ENCODE measurements at regions of chr11 and their contacts with region 1.

Region 1: GRCh38 chr11:47176328-47177228 is at the start of gene ARFGAP2:
- DNase-seq: peak; percentile 96 to 97
- ATAC-seq: peak; percentile 87 to 96 (median 92)
- H3K4me3 ChIP-seq: peak within 1 kb of the TSS; percentile 75 to 100 (median 90)
- H3K27ac ChIP-seq: peak within 1 kb of the TSS; percentile 92 to 100 (median 98)
- H3K4me1 ChIP-seq: peaks cover 33 to 89% (median 73%) of the 10 kb centered on the region in 9 donors
- H3K27me3 ChIP-seq: no peaks in the 10 kb centered on the region
- CTCF ChIP-seq: no peak
- total RNA-seq, gene ARFGAP2: 55.7 to 69.7 (median 62.9) TPM

Region 2: DNA sequence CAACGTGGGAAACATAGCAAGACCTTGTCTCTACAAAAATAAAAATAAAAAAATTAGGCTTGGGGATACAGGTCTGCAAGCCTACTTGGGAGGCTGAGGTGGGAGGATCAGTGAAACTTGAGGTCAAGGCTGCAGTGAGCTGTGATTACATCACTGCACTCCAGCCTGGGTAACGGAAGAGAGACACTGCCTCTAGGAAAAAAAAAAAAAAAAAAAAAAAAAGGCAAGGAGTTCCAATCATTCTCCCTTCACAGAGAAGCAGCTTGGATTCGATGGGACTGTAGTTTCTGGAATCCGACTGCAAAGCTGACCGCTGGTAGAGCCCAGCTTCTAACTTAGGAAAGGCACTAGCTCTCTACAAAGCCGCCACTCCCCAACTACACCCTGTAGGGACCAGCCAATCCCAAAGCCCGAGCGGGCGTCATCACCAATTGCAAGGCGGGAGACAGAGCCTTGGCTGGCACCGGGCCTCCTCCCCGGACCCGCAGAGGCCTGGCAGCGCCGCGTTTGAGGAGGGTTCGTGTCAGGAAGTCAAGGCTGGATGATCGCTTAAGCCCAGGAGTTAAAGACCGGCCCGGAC is 37.5 kb after region 1 on chr11:
- intact Hi-C with region 1: loop called in 3 of 10 experiments (anchors 2 to 5 kb)
- DNase-seq: peak; percentile 92
- ATAC-seq: peak; percentile 91 to 96 (median 94)
- H3K4me3 ChIP-seq: peak overlapping the region; percentile 49 to 85 (median 66)
- H3K27ac ChIP-seq: peak overlapping the region; percentile 76 to 97 (median 90)
- H3K4me1 ChIP-seq: peaks cover 11 to 47% (median 21%) of the 10 kb centered on the region in 9 donors
- H3K27me3 ChIP-seq: no peaks in the 10 kb centered on the region
- CTCF ChIP-seq: peak in 1 of 9 donors; percentile 6

Region 3: DNA sequence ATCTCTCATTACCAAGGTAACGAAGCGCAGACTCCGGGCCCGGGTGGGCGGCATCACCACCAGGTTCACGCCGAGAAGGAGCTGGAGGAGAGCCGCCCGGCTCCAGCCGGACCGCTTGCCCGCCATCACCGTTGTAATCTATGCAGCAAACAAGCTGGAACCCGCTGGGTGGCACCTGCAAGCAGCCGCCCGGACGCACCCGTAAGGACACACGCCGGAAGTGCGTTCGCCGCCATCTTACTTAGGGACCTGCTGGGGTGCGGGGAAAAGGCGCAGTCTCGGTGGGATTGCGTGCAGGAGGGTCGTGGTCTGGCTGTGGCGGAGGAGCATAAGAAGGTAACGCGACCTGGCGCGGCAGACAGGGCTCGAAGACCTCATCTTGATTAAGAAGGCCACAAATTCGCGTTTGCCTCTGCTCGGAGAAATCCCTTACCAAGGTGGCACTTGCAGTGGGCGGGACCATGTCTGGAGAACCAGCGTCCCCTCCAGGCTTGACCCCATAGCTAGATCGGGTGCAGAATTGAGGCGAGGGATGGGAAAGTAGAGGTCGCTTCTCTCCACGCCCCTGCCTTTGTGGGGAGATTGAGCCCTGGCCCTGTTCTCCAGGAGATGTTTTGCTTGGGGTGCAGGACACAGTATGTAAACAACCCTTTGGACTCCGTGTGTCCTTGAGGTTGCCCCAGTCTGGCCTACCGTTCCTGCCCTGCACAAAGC is 72.2 kb after region 1 on chr11 and contains the start of gene ACP2:
- intact Hi-C with region 1: loop called in 1 of 10 experiments (anchors 5 kb)
- DNase-seq: peak; percentile 86 to 87
- ATAC-seq: peak; percentile 93 to 98 (median 97)
- H3K4me3 ChIP-seq: peak within 1 kb of the TSS; percentile 50 to 97 (median 74)
- H3K27ac ChIP-seq: peak within 1 kb of the TSS; percentile 61 to 95 (median 90)
- H3K4me1 ChIP-seq: peaks cover 12 to 53% (median 31%) of the 10 kb centered on the region in 9 donors
- H3K27me3 ChIP-seq: no peaks in the 10 kb centered on the region
- CTCF ChIP-seq: peak in 5 of 9 donors; percentile 8 to 33 (median 25)
- total RNA-seq, gene ACP2: 17.2 to 38.8 (median 21.8) TPM

Region 4: DNA sequence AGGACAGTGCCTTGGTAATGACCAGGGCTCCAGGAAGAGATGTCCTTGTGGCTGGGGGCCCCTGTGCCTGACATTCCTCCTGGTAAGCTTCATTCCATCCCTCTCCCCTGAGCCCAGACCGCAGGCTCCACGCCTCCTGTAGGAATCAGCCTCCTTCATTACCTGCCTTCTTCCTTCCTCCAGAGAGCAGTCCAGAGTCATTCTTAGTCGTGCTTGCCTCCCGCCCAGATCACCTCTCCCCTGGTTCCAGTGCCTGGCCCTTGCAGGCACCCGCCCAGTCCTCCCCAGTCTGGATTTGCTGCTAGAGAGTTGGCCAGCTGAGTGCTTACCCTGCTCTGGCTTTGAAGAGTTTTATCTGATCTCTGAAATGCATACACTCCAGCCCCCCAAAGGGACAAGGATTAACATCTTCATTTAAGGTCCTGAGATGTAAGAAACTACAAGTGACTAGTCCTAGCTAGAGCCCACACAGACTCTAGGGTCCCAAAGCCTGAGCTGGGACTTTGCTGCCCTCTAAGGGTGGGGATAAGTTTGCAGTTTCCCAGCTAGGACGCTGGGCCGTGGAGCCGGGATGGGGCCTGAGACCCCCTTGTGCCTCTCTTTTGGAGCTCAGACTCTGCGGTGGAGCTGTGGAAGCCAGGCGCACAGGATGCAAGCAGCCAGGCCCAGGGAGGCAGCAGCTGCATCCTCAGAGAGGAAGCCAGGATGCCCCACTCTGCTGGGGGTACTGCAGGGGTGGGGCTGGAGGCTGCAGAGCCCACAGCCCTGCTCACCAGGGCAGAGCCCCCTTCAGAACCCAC is 82.8 kb after region 1 on chr11:
- intact Hi-C with region 1: loop called in 8 of 10 experiments (anchors 2 to 10 kb)
- DNase-seq: peak in 1 of 2 donors; percentile 45
- ATAC-seq: peak in 6 of 8 donors; percentile 24 to 51 (median 40)
- H3K4me3 ChIP-seq: peak overlapping the region in 6 of 10 donors; percentile 11 to 53 (median 49)
- H3K27ac ChIP-seq: peak overlapping the region in 7 of 10 donors; percentile 19 to 88 (median 83)
- H3K4me1 ChIP-seq: peaks cover 24 to 63% (median 55%) of the 10 kb centered on the region in 9 donors
- H3K27me3 ChIP-seq: no peaks in the 10 kb centered on the region
- CTCF ChIP-seq: peak; percentile 62 to 78 (median 73)

Region 5: GRCh38 chr11:47269002-47269828 is 92.6 kb after region 1 on chr11:
- intact Hi-C with region 1: loop called in 3 of 10 experiments (anchors 5 to 10 kb)
- DNase-seq: peak; percentile 90 to 91
- ATAC-seq: peak; percentile 89 to 95 (median 92)
- H3K4me3 ChIP-seq: peak overlapping the region; percentile 54 to 91 (median 82)
- H3K27ac ChIP-seq: peak overlapping the region; percentile 92 to 99 (median 98)
- H3K4me1 ChIP-seq: peaks cover 10 to 61% (median 49%) of the 10 kb centered on the region in 9 donors
- H3K27me3 ChIP-seq: no peaks in the 10 kb centered on the region
- CTCF ChIP-seq: peak in 4 of 9 donors; percentile 13 to 29 (median 20)

Region 6: GRCh38 chr11:47407746-47408590 is 231.4 kb after region 1 on chr11 and contains the start of gene SLC39A13:
- intact Hi-C with region 1: loop called in 1 of 10 experiments (anchors 5 kb)
- DNase-seq: peak; percentile 93 to 96
- ATAC-seq: peak; percentile 87 to 94 (median 91)
- H3K4me3 ChIP-seq: peak within 1 kb of the TSS; percentile 59 to 86 (median 77)
- H3K27ac ChIP-seq: peak within 1 kb of the TSS; percentile 89 to 98 (median 94)
- H3K4me1 ChIP-seq: peaks cover 11 to 45% (median 32%) of the 10 kb centered on the region in 9 donors
- H3K27me3 ChIP-seq: no peaks in the 10 kb centered on the region
- CTCF ChIP-seq: peak; percentile 55 to 96 (median 87)
- total RNA-seq, gene SLC39A13: 31.1 to 54.5 (median 40.8) TPM